ENCODE measurements at regions of chr12 and their contacts with region 1.

Region 1: DNA sequence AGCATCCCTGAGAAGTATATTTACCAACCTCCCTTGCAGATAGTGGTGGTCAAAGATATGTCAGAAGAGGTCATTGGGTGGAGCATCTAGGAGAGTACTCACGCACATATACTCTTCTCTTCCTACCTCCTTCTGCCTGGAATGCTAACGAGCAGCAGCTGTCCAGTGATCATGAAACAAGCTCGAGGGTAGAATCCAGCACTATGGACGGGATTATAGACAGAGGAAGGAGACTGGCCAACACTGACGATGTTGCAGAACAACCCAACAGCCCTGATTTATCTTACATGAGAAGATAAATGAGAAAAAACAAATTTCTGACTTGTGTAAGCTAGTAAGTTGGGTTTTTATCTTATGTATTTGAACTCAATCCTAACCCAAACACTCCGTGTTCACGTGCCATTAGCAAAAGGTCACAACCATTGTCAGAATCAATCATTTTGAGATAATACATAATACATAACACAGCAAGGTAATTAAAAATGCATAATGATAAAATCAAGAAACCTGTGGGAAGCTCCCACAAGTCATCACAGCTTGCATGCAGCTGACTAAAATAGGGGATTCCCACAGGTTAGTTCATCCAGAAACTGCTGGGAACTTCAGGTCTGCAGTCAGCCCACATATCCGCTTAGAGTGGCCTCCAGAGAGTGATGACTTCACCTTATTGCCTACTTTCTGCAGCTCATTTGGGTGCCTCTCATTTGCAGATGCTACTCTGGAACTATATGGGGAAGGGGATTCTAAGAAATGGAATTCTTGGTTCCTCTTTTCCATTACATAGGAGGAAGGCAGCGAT is 36.3 kb upstream of the STK38L start:
- DNase-seq: peak; percentile 23
- H3K4me3 Mint-ChIP-seq: no peak overlapping the region
- H3K27ac Mint-ChIP-seq: no peak overlapping the region
- H3K4me1 Mint-ChIP-seq: peaks cover 22% of the 10 kb centered on the region
- H3K27me3 Mint-ChIP-seq: no peaks in the 10 kb centered on the region

Region 2: DNA sequence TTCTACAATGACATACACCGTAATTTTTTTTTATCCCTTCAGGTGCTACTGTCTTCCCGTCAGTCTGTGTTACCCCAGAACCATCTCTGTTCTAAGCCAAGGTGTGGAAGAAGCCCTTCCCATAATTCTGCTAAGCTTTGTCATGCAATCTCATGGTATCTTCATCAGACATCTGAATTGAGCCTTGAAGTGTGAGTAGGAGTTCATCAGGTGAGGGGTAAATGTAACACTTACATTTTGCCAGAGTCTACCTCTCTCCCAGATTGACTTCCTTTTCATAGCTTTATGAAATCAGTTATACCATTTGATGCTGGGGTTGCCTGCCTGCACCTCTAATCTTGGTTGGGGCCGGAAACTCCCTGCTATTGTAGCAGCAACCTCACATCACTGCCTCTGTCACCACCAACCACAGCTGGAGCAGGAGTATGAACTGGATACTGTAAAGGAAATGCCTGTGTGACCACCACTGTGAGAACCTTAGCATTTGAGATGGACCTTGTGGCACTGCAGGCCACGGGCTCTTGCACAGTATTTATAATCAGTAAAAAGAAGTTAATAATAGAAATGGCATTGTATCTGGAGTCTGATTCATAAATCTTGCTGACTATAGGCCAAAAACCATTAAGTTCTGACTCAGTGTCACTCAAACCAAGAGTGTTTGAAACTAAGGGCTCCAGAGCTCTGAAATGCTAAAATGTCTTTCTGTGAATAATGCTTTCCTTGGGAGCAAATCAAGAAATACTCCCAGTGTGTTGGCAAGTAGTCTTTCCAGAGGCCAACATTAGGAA is 22.4 kb before region 1 on chr12:
- intact Hi-C with region 1: loop called (anchors 1 kb)
- DNase-seq: peak; percentile 44
- H3K4me3 Mint-ChIP-seq: no peak overlapping the region
- H3K27ac Mint-ChIP-seq: peak overlapping the region; percentile 62
- H3K4me1 Mint-ChIP-seq: peaks cover 27% of the 10 kb centered on the region
- H3K27me3 Mint-ChIP-seq: no peaks in the 10 kb centered on the region

Region 3: DNA sequence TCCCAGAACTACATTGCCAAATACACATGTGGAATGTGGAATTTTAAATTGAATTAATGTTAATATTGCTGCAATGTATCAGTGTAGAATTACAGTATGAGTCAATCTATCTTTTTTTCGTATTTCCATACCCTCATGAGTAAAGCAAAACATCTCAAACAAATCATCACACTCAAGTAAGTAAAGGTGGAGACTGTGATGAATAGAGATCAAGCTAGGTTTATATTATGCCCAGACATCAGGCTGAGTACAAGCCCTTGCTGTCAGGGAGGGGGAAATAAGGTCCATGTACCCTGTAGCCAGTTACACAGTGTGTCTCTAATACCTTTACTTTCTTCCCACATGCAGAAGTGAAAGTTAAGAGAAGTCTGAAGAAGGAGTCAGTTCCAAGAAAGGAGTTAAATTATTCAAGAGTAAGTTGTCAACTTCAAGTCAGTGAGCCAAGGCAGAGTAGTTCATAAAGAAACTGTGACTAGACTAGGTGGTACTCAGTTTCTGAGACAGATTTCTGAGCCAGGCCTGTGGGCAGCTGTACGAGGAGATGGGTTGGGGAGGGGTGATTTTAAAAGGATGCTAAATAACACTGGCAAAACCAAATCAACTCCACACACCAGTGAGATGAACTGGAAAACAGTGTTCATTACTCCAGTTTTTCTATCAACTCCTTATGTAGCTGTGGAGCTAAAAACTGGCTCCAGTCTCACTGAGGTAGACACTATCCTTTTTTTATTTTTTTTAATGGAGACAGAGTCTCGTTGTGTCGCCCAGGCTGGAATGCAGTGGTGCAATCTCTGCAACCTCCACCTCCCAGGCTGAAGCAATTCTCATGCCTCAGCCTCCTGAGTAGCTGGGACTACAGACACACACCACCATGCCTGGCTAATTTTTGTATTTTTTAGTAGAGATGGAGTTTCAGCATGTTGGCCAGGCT is 12.5 kb after region 1 on chr12:
- intact Hi-C with region 1: loop called (anchors 2 kb)
- DNase-seq: no peak
- H3K4me3 Mint-ChIP-seq: no peak overlapping the region
- H3K27ac Mint-ChIP-seq: peak overlapping the region; percentile 34
- H3K4me1 Mint-ChIP-seq: peaks cover 15% of the 10 kb centered on the region
- H3K27me3 Mint-ChIP-seq: no peaks in the 10 kb centered on the region

Region 4: GRCh38 chr12:27237790-27238771 is 30.3 kb after region 1 on chr12:
- intact Hi-C with region 1: loop called (anchors 2 kb)
- DNase-seq: no peak
- H3K4me3 Mint-ChIP-seq: no peak overlapping the region
- H3K27ac Mint-ChIP-seq: peak overlapping the region; percentile 78
- H3K4me1 Mint-ChIP-seq: peaks cover 31% of the 10 kb centered on the region
- H3K27me3 Mint-ChIP-seq: no peaks in the 10 kb centered on the region

Region 5: DNA sequence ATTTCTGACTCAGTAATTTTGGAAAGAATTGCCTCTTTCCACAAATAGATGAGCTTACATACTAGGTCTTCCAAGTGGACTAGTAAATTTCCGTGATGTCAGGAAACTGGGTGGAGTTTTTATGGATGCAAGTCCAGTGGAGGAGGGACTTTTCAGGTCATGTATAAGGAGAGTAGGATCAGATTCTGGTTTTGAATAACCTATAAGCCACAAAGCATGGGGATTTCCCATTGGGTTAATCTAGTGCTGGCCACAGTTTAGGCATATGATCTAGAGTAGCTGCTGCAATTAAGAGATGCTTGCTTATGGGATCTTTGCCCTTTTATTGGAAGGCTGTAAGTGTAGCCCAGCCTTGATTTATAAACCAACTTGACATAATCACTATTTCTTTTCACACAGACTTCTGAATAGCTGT is 70.0 kb after region 1 on chr12:
- intact Hi-C with region 1: loop called (anchors 5 kb)
- DNase-seq: no peak
- H3K4me3 Mint-ChIP-seq: no peak overlapping the region
- H3K27ac Mint-ChIP-seq: peak overlapping the region; percentile 16
- H3K4me1 Mint-ChIP-seq: peaks cover 23% of the 10 kb centered on the region
- H3K27me3 Mint-ChIP-seq: no peaks in the 10 kb centered on the region

Region 6: DNA sequence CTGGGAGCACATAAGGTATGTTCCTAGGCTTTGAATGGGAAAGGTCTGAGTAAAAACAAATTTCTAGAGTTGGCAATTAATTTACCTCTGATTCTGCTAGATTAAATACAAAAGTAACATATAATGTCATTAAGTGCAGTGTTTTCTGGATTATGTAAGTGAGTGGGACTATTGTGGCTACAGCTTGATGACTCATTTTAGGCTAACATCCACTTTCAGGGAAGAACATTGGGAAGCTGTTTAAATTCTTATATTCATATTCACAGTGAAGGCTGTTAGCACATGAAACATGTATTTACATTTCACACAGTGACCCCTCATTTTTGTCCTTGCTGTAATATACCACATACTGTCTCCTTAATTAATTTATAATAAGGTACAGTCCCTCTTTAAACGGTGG is 111.6 kb after region 1 on chr12:
- intact Hi-C with region 1: no loop called
- DNase-seq: no peak
- H3K4me3 Mint-ChIP-seq: no peak overlapping the region
- H3K27ac Mint-ChIP-seq: no peak overlapping the region
- H3K4me1 Mint-ChIP-seq: peaks cover 1% of the 10 kb centered on the region
- H3K27me3 Mint-ChIP-seq: no peaks in the 10 kb centered on the region